ENCODE measurements at regions of chr15 and their contacts with region 1.

Region 1: DNA sequence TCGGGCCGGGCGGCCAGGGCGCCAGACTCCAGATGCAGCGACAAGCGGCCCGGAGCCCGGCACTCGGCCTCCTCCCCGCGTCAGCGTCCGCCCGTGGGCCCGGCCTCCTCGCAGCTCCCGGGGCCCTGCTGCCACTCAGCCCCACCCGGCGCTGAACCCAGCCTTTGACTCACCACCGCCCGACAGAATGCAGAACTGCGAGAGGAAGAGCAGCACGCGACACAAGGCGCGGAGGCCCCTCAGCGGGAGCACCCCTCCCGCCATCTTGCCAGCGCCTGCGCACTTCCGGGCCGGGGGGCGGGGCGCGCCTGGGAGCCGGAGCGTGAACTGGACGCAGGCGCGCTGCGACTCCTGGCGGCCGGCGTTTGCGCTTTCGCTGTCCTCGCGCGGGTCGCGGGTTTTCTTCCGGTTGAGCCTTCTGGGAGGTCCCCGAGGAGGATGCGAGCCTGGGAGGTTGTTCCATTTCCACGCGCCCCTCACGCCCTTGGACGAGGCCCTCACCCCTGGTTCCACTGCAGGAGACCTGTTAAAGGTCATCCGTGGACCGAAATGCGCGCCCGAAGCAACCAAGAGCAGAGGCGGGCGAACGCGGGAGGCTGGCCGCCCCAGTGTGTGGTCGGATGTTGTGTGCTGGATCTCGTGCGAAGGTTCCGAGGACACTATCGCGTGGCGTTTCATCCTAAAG is at the start of gene TM2D3:
- DNase-seq: peak; percentile 90 to 94
- H3K4me3 ChIP-seq: peak within 1 kb of the TSS; percentile 74 to 85
- H3K27ac ChIP-seq: peak within 1 kb of the TSS; percentile 90 to 96
- H3K4me1 ChIP-seq: peaks cover 8 to 11% of the 10 kb centered on the region in 2 donors
- H3K27me3 ChIP-seq: no peaks in the 10 kb centered on the region
- CTCF ChIP-seq: peak; percentile 57 to 98 (median 88)
- POLR2A ChIP-seq: peak; percentile 94 to 96
- total RNA-seq, gene TM2D3: 14.7 to 65.0 (median 46.5) TPM

Region 2: DNA sequence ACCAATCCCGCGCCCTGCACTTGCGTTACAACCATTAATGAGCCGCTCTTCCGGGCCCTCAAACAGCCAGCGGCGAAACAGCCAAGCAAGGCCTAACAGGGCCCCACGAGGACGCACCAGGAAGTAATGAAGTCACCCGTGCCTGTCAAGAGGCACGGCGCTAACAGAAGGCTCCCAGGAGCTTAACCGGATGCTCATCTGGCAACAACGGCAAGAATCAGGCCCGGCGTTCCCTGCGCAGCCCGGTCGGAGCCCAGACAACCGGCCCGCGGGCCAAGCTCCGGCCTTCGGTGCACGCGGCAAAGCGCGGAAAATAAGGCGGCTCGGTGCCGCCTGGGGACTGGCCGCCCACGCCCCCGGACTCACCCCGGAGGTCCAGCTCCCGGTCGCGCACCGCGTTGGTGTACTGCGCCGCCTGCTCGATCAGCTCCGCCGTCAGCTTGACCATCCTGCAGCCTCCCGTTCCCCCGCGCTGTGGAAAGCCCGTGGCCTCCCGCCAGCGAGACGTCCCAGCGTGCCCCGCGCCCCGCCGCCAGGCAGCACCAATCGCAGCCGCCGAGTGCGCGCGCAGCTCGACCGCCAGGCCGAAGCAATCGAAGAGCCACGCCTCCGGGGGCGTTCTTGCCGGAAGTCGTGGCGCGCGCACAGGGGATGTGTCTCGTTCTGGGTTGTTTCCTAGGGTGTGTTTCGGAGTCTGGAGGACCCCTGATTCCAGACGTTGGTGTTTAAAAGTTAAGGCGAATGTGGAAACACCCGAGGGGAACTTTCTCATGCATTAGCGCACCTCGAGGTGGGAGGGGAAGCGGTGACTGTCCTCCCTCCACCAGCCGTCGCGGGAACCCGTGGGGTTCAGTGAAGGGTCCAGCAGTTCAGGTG is 357.3 kb before region 1 on chr15 and contains the start of gene SNRPA1:
- intact Hi-C with region 1: loop called (anchors 5 kb)
- DNase-seq: peak; percentile 97 to 98
- H3K4me3 ChIP-seq: peak within 1 kb of the TSS; percentile 82 to 95
- H3K27ac ChIP-seq: peak within 1 kb of the TSS; percentile 85 to 95
- H3K4me1 ChIP-seq: peaks cover 0 to 5% of the 10 kb centered on the region in 2 donors
- H3K27me3 ChIP-seq: no peaks in the 10 kb centered on the region
- CTCF ChIP-seq: peak in 1 of 4 experiments; percentile 53
- POLR2A ChIP-seq: peak; percentile 66 to 86
- total RNA-seq, gene SNRPA1: 3.2 to 56.4 (median 25.7) TPM

Region 3: DNA sequence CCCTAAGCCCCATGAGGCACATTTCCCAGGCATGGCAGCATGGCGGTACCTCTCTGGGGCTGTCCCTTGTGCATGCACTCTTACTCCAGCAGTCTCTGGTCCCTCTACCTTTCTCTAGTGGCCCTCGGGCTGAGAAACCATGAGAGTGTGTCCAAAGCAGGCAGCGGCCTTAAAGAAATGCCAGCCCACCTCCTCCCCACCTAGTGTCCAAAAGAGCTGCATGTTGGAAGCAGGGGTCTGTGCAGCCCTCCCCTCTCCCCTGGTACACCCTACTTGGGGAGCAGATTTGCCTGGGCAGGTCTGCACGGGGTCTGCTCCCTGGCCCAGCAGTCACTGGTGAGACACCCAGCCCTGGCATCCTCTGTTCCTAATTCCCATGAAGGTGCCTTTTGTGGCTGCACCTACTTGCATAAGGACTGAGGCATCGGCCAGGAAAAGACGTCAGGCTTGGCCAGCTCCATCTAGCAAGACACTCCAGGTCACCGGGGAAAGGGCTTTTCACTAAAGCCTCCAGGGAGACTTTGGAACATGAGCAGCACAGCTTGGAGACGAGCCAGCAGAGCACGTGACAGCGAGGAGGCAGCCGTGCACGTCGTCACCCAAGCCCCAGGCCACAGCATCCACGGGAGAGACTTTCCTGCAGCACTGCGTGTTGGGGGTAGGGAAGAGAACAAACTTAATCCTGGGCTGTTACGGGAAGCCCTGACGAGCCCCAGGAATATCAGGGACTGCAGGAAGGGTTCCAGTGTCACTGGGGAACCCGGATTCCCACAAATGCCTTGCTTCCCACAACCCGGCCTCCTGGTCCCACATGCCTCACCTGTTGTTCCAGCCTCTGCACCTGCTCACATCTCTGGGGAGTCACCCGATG is 38.9 kb before region 1 on chr15:
- intact Hi-C with region 1: no loop called
- DNase-seq: peak; percentile 65 to 68
- H3K4me3 ChIP-seq: no peak overlapping the region
- H3K27ac ChIP-seq: no peak overlapping the region
- H3K4me1 ChIP-seq: no peaks in the 10 kb centered on the region
- H3K27me3 ChIP-seq: no peaks in the 10 kb centered on the region
- CTCF ChIP-seq: no peak
- POLR2A ChIP-seq: no peak